Gastrocnemius medialis (tissue), 4 donors: ENCODE measurements at regions of chr1 and their contacts with region 1.

Region 1: GRCh38 chr1:31663622-31664452 is 19.2 kb upstream of the PEF1 start:
- DNase-seq: peak in 1 of 2 donors; percentile 37
- ATAC-seq: peak; percentile 53 to 57
- H3K4me3 ChIP-seq: no peak overlapping the region
- H3K27ac ChIP-seq: no peak overlapping the region
- H3K4me1 ChIP-seq: no peaks in the 10 kb centered on the region
- H3K27me3 ChIP-seq: no peaks in the 10 kb centered on the region
- CTCF ChIP-seq: peak; percentile 88 to 96 (median 94)
- POLR2A ChIP-seq: no peak

Region 2: GRCh38 chr1:31063631-31064030 is 600.2 kb before region 1 on chr1:
- in situ Hi-C with region 1: no loop called
- intact Hi-C with region 1: no loop called
- DNase-seq: no peak
- ATAC-seq: no peak
- H3K4me3 ChIP-seq: peak overlapping the region; percentile 79 to 91 (median 80)
- H3K27ac ChIP-seq: peak overlapping the region; percentile 92 to 97 (median 94)
- H3K4me1 ChIP-seq: peaks cover 34 to 36% of the 10 kb centered on the region in 2 donors
- H3K27me3 ChIP-seq: no peaks in the 10 kb centered on the region
- CTCF ChIP-seq: no peak
- POLR2A ChIP-seq: no peak

Region 3: DNA sequence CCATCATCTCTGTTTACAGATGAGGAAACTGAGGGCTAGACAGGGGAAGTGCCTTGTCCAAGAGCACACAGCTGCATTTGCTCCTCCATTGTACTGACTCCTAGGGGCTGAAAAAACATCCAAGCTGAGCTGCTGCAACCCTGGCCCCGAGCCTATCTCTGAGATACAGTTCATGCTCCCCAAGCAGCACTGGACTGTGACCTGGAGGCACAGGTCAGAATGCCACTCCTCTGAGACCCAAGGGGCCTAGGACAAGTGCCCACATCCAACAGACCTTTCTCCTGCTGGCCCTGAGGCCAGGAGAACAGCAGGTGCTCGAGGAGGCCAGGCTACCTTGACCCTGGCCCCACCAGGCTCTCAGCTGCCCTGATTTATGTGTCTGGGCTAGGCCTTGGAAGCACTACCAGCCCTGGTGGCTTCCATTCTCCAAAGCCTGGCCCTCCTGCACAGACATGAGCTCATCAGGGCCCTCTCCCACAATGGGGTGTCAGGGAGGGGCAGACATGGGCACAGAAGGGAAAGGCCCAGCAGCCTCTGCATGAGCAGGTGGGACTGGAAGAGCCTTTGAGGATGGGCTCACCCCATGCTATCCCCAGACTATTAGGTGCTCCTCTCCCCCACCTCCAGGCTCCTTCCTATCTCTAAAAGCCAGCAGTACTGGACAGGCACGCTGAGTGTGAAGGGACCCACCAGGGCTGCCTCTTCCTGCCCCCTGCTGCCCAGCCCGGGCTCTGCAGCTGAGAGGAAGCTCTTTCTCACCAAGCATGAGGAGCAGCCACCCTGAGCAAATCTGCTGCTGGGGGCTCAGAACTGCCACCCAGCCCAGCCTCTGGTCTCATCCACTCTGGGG is 81.5 kb after region 1 on chr1:
- in situ Hi-C with region 1: no loop called
- intact Hi-C with region 1: loop called (anchors 1 kb)
- DNase-seq: peak in 1 of 2 donors; percentile 29
- ATAC-seq: peak; percentile 30 to 46
- H3K4me3 ChIP-seq: no peak overlapping the region
- H3K27ac ChIP-seq: no peak overlapping the region
- H3K4me1 ChIP-seq: peaks cover 0 to 1% of the 10 kb centered on the region in 2 donors
- H3K27me3 ChIP-seq: no peaks in the 10 kb centered on the region
- CTCF ChIP-seq: peak in 4 of 5 experiments; percentile 53 to 72 (median 62)
- POLR2A ChIP-seq: no peak